ENCODE measurements at regions of chr2 and their contacts with region 1.

Region 1: GRCh38 chr2:30231212-30231995 is at the start of gene LBH:
- DNase-seq: peak; percentile 82
- H3K4me3 ChIP-seq: peak within 1 kb of the TSS; percentile 41 to 81 (median 70)
- H3K27ac ChIP-seq: peak within 1 kb of the TSS; percentile 85 to 92 (median 90)
- H3K4me1 ChIP-seq: peaks cover 5 to 45% (median 26%) of the 10 kb centered on the region in 4 donors
- H3K27me3 ChIP-seq: peaks cover 46% of the 10 kb centered on the region
- CTCF ChIP-seq: no peak
- EP300 ChIP-seq: no peak
- POLR2A ChIP-seq: peak; percentile 96
- total RNA-seq, gene LBH: 7.0 to 37.8 (median 16.3) TPM

Region 2: DNA sequence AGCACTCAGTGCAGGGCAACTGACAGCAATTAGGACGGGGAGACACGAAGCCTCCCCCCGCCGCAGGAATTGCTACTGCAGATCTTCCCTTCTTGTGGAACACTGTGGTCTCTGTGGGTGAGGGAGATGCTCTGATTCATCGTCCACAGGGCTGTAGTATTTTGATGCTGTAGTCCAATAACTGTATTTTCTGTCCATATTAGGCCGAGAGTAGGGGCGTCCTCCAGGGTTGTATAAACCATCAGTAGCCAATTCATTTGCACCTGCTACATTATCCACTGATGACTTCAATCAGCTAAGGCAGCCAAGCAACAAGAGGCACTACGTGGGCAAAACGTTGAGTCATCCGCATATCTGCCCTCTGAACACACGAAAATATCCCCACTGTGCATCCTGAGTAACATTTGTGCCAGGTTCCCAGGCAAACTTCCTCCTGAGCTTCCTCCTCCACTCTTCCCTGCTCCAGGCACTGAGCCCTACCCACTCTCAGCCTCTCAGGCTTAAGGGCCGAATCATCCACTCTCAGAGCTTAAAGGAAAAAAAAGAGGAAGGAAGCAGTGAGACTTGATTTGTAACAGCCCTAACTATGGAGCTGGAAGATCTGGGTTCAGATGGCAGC is 62.0 kb after region 1 on chr2:
- in situ Hi-C with region 1: no loop called
- intact Hi-C with region 1: no loop called
- DNase-seq: no peak
- H3K4me3 ChIP-seq: no peak overlapping the region
- H3K27ac ChIP-seq: peak overlapping the region; percentile 3 to 50 (median 32)
- H3K4me1 ChIP-seq: peaks cover 0 to 11% (median 4%) of the 10 kb centered on the region in 4 donors
- H3K27me3 ChIP-seq: no peaks in the 10 kb centered on the region
- CTCF ChIP-seq: no peak
- EP300 ChIP-seq: no peak
- POLR2A ChIP-seq: no peak

Region 3: GRCh38 chr2:30421604-30422443 is 190.4 kb after region 1 on chr2:
- in situ Hi-C with region 1: loop called in 2 of 4 experiments (anchors 25 kb)
- intact Hi-C with region 1: no loop called
- DNase-seq: no peak
- H3K4me3 ChIP-seq: no peak overlapping the region
- H3K27ac ChIP-seq: peak overlapping the region; percentile 51 to 68 (median 66)
- H3K4me1 ChIP-seq: peaks cover 4 to 20% (median 12%) of the 10 kb centered on the region in 4 donors
- H3K27me3 ChIP-seq: no peaks in the 10 kb centered on the region
- CTCF ChIP-seq: no peak
- EP300 ChIP-seq: no peak
- POLR2A ChIP-seq: no peak

Region 4: GRCh38 chr2:30447149-30448045 is 216.0 kb after region 1 on chr2 and contains the start of gene LCLAT1:
- in situ Hi-C with region 1: loop called in 1 of 4 experiments (anchors 25 kb)
- intact Hi-C with region 1: no loop called
- DNase-seq: peak; percentile 84
- H3K4me3 ChIP-seq: peak within 1 kb of the TSS; percentile 68 to 77 (median 74)
- H3K27ac ChIP-seq: peak within 1 kb of the TSS; percentile 77 to 89 (median 82)
- H3K4me1 ChIP-seq: peaks cover 0 to 39% (median 32%) of the 10 kb centered on the region in 4 donors
- H3K27me3 ChIP-seq: no peaks in the 10 kb centered on the region
- CTCF ChIP-seq: peak in 1 of 5 experiments; percentile 13
- EP300 ChIP-seq: no peak
- POLR2A ChIP-seq: no peak
- total RNA-seq, gene LCLAT1: 10.9 to 26.5 (median 16.6) TPM

Measured in transverse colon (tissue), 4 donors.